ENCODE measurements at regions of chr11 and their contacts with region 1.

Region 1: GRCh38 chr11:119474682-119475596 is 52.0 kb upstream of the THY1 start:
- DNase-seq: peak; percentile 86
- H3K4me3 ChIP-seq: peak overlapping the region; percentile 15; the same call in 1 of the 2 replicates
- H3K27ac ChIP-seq: peak overlapping the region; percentile 64
- H3K4me1 ChIP-seq: peaks cover 31% of the 10 kb centered on the region
- H3K27me3 ChIP-seq: no peaks in the 10 kb centered on the region

Region 2: DNA sequence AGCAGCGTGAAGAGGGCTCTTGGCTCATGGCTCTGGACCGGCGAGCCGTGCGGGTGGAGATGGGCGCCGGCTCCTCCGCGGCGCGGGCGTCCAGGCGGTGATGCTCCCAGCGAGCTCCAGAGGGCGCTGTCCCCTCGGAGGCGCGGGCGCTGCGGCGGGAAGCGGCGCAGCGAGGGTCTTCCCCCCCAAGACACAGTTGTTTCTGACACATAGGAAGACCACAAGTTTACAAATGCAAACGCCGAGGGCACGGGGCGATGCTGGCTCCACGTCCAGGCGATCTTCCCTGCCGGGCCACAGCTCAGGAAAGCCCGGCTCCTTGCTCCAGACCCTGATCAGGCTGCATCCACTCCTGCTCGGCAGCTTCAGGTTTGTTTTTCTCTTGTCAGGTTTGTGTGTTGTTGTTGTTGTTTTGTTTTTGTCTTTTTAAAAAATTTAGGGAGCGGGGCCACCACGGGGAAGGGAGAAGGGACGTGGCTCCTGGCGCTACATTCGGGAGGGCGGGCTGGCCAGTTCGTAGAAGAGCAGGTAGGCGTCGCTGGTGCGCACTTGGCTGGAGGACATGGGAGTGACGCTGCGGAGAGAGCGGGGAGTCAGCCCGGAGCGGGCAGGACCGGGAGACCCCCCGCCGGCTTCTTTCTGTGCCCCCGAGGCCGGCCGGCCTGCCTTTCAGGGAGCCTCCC is 118.4 kb before region 1 on chr11:
- in situ Hi-C with region 1: loop called (anchors 10 kb)
- DNase-seq: peak; percentile 91
- H3K4me3 ChIP-seq: peak overlapping the region; percentile 78
- H3K27ac ChIP-seq: no peak overlapping the region
- H3K4me1 ChIP-seq: peaks cover 9% of the 10 kb centered on the region
- H3K27me3 ChIP-seq: no peaks in the 10 kb centered on the region